Posterior vena cava (tissue), 2 donors: ENCODE measurements at regions of chr16 and their contacts with region 1.

Region 1: GRCh38 chr16:4749700-4750257 is 15.4 kb downstream of the DNAAF8 start:
- DNase-seq: no peak

Region 2: GRCh38 chr16:4709481-4709880 is 40.3 kb before region 1 on chr16:
- intact Hi-C with region 1: loop called in 1 of 2 experiments (anchors 2 kb)
- DNase-seq: no peak

Region 3: DNA sequence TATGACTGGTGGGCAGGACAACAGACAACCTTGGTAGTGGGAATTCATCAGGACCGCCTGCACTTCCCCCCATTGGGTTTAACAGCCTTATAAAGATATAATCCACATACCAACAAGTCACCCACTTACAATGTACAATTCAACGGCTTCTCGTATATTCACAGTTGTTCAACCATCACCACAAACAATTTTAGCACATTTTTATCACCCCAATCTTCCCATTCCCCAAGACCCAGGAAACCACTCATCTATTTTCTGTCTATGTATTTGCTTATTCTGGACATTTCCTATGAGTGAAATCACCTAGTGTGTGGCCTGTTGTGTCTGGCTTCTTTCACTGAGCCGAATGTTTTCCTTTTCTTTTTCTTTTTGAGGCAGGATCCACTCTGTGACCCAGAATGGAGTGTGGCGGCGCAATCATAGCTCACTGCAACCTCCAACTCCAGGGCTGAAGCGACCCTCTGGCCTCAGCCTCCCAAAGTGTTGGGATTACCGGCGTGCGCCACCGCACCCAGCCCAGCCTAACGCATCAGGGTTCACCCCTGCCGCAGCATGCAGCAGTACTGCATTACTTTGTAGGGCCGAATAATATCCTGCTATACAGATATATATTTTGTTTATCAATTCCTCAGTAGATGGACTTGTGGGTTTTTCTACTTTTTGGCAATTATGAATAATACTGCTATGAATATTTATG is 26.6 kb before region 1 on chr16:
- intact Hi-C with region 1: no loop called
- DNase-seq: no peak